Cardiac septum (tissue), 1 donor: ENCODE measurements at regions of chr3 and their contacts with region 1.

Region 1: DNA sequence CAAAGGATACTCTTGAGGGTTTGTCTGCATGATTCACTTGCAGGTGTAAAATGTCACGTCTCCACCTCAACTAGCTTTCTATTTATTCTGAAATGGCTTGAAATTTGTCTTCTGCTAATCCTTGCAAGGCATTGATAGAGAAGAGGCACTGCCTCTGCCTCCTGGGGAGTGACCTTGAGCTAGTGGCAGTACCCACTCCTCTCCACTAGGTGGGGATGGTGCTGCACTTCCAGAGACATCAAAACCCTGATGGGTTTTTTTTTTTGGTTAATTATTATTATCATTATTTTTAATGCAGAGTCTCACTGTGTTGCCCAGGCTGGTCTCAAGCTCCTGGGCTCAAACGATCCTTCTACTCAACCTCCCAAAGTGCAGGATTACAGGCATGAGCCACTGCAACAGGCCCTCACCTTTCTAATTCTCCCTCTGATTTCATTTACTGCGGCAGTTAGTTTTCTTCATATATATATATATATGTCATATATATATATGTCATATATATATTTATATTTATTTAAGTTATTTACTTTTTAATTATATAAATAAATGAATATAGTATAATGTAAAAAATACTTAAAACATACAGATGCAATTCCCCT is 117.6 kb upstream of the EIF1B start:
- DNase-seq: no peak

Region 2: GRCh38 chr3:40120806-40121205 is 71.1 kb before region 1 on chr3:
- intact Hi-C with region 1: no loop called
- DNase-seq: no peak

Region 3: DNA sequence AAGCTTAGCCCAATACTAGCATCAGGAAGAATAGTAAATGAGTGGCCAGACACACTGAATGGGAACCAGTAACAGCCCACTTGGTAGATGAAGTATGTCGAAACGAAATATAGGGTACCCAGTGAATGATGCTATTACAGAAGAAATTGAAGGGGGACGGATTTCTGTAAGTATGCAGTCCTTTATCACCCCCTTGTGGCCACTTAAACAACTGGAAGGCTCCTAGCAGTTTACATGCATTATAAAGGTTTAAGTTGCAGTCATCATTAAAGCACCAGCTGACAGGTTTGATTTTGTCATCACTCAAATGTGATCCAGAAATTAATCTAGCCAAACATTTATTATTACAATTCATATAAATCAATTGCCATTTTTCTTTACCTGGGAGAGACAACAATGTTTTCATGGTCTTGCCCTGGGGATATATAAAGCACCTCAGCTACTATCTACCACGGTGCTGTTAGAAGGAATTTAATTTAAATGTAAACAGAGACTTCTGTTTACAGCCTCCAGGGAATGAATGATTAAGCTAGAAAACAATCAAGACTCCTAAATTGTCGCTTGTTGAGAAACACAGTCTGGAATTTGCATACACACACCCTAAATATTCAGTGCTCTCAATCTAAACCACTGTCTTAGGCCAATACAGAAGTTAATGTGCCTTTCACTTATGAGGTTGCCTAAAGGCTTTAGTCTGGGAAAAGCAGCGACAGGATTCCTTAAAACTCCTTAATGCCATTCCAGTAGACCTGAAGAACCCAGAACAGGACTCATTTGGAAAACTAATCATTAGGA is 125.3 kb after region 1 on chr3:
- intact Hi-C with region 1: loop called (anchors 1 kb)
- DNase-seq: no peak